Activated CD4-positive, alpha-beta T cell treated with anti-CD3 and anti-CD28 coated beads for 36 hours (primary cell): ENCODE measurements at regions of chr1 and their contacts with region 1.

Region 1: GRCh38 chr1:22052115-22053016 is at the start of gene CDC42:
- DNase-seq: peak; percentile 98
- ATAC-seq: peak; percentile 86
- H3K4me3 Mint-ChIP-seq: peak within 1 kb of the TSS; percentile 96
- H3K27ac Mint-ChIP-seq: peak within 1 kb of the TSS; percentile 98
- H3K4me1 Mint-ChIP-seq: peaks cover 56% of the 10 kb centered on the region
- H3K27me3 Mint-ChIP-seq: no peaks in the 10 kb centered on the region
- total RNA-seq, gene CDC42: 298 to 339 TPM

Region 2: DNA sequence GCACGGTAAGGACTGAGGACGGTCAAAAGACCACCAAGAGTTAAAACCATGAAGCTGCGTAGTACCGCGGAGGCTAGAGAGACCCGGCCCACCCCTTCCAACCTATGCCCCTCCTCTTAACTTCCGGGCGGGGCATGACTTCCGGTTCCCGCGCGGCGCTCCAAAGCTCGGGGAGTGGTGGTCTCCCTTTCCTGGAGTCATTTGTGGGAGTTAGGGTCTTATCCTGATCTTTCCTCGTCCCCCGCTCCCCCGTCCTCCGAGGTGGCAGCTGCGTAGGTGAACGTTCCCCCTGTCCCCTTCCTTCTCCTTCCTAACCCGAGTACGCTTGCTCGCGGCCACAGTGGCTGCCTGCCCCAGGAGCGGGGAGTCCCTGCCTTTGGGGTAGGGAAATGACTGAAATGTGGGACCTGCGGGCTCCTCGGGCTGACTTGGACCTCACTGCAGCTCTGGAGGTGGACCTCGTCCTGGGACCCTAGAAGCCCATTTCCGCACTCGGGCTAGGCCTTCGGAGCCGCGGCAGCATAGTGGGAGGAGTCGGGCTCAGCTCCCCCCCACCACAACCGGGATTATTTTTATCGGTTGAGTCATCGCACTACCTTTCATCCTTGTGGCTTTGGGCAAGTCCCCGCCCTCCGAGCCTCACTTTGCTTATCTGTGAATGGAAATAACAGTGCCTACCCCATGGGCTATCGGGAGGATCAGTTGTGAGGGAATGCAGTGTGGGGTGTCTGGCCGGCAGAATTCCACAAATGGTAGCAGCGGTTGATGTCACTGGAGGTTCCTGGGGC is 26.8 kb before region 1 on chr1:
- CTCF ChIA-PET with region 1: interaction called, 35 read pairs
- POLR2A ChIA-PET with region 1: interaction called, 65 read pairs
- intact Hi-C with region 1: loop called (anchors 1 kb)
- DNase-seq: peak; percentile 94
- ATAC-seq: peak; percentile 74
- H3K4me3 Mint-ChIP-seq: peak overlapping the region; percentile 82
- H3K27ac Mint-ChIP-seq: peak overlapping the region; percentile 99
- H3K4me1 Mint-ChIP-seq: peaks cover 59% of the 10 kb centered on the region
- H3K27me3 Mint-ChIP-seq: no peaks in the 10 kb centered on the region

Region 3: GRCh38 chr1:22031214-22031962 is 21.0 kb before region 1 on chr1:
- CTCF ChIA-PET with region 1: interaction called, 4 read pairs
- POLR2A ChIA-PET with region 1: interaction called, 11 read pairs
- intact Hi-C with region 1: no loop called
- DNase-seq: peak; percentile 74
- ATAC-seq: peak; percentile 74
- H3K4me3 Mint-ChIP-seq: peak overlapping the region; percentile 56
- H3K27ac Mint-ChIP-seq: peak overlapping the region; percentile 85
- H3K4me1 Mint-ChIP-seq: peaks cover 61% of the 10 kb centered on the region
- H3K27me3 Mint-ChIP-seq: no peaks in the 10 kb centered on the region

Region 4: DNA sequence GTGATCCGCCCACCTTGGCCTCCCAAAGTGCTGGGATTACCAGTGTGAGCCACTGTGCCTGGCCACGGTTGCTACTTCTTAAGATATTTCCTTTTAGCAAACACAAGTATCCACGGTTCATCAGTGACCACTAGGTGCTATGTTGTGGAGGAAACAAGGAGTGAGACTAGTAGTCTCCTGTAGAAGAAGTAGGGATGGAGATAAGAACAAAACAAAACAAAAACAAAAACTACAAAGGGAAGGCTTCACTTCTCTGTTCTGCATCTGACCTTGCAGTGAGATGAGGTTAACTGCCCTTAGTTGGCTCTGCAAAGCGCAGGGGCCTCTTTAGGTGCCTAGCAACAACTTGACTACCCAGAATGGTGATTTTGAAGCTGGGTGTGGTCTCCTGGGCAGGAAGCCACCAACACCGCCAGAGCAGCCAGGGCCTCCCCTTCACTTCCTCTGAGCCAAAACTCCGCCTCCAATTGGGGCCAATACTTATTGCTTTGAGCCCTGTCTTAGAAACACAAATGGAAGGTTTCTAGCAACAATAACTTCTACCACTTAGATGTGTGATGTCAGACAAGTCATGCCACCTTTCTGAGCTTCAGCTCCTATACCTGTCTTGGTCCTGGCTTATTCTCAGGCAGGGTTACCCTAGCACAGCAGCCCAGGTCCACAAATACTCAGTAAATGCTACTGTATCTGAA is 12.6 kb before region 1 on chr1:
- CTCF ChIA-PET with region 1: interaction called, 9 read pairs
- POLR2A ChIA-PET with region 1: interaction called, 30 read pairs
- intact Hi-C with region 1: loop called (anchors 1 kb)
- DNase-seq: peak; percentile 94
- ATAC-seq: peak; percentile 98
- H3K4me3 Mint-ChIP-seq: peak overlapping the region; percentile 64
- H3K27ac Mint-ChIP-seq: peak overlapping the region; percentile 97
- H3K4me1 Mint-ChIP-seq: peaks cover 62% of the 10 kb centered on the region
- H3K27me3 Mint-ChIP-seq: no peaks in the 10 kb centered on the region

Region 5: GRCh38 chr1:22064751-22065402 is 12.5 kb after region 1 on chr1:
- CTCF ChIA-PET with region 1: interaction called, 3 read pairs
- POLR2A ChIA-PET with region 1: interaction called, 7 read pairs
- intact Hi-C with region 1: loop called in 1 of 2 experiments (anchors 1 kb)
- DNase-seq: no peak
- ATAC-seq: no peak
- H3K4me3 Mint-ChIP-seq: no peak overlapping the region
- H3K27ac Mint-ChIP-seq: peak overlapping the region; percentile 81
- H3K4me1 Mint-ChIP-seq: peaks cover 87% of the 10 kb centered on the region
- H3K27me3 Mint-ChIP-seq: no peaks in the 10 kb centered on the region

Region 6: DNA sequence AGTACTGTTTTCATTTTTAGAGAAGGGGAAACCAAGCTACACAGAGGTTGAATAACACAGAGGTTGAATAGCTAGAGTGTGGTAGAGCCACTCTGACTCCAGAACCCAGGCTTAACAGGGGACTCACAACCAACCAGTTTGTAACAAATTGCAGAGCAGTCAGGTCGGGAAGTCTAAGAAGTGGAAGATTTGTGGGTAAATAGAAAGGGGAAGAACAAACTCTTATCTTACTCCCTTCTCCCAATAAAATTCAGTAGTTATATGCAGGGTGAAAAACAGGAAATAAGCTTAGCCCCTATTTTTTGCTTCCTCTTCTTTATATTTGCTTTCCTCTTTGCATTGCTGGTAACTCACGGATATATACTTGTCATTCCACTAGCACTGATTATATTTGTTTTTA is 23.4 kb after region 1 on chr1:
- CTCF ChIA-PET with region 1: no interaction called
- POLR2A ChIA-PET with region 1: no interaction called
- intact Hi-C with region 1: no loop called
- DNase-seq: no peak
- ATAC-seq: peak; percentile 32
- H3K4me3 Mint-ChIP-seq: no peak overlapping the region
- H3K27ac Mint-ChIP-seq: peak overlapping the region; percentile 77
- H3K4me1 Mint-ChIP-seq: peaks cover 85% of the 10 kb centered on the region
- H3K27me3 Mint-ChIP-seq: no peaks in the 10 kb centered on the region

Region 7: GRCh38 chr1:22089787-22090186 is 37.4 kb after region 1 on chr1:
- CTCF ChIA-PET with region 1: interaction called, 3 read pairs
- POLR2A ChIA-PET with region 1: interaction called, 5 read pairs
- intact Hi-C with region 1: loop called (anchors 1 to 2 kb)
- DNase-seq: no peak
- ATAC-seq: no peak
- H3K4me3 Mint-ChIP-seq: peak overlapping the region; percentile 33
- H3K27ac Mint-ChIP-seq: peak overlapping the region; percentile 82
- H3K4me1 Mint-ChIP-seq: peaks cover 91% of the 10 kb centered on the region
- H3K27me3 Mint-ChIP-seq: no peaks in the 10 kb centered on the region

Region 8: GRCh38 chr1:22451702-22452474 is 399.5 kb after region 1 on chr1 and contains the start of gene ZBTB40:
- CTCF ChIA-PET with region 1: no interaction called
- POLR2A ChIA-PET with region 1: no interaction called
- intact Hi-C with region 1: loop called in 1 of 2 experiments (anchors 2 kb)
- DNase-seq: peak; percentile 98
- ATAC-seq: peak; percentile 97
- H3K4me3 Mint-ChIP-seq: peak within 1 kb of the TSS; percentile 94
- H3K27ac Mint-ChIP-seq: peak within 1 kb of the TSS; percentile 90
- H3K4me1 Mint-ChIP-seq: peaks cover 41% of the 10 kb centered on the region
- H3K27me3 Mint-ChIP-seq: no peaks in the 10 kb centered on the region
- total RNA-seq, gene ZBTB40: 12.7 to 13.5 TPM

Region 9: DNA sequence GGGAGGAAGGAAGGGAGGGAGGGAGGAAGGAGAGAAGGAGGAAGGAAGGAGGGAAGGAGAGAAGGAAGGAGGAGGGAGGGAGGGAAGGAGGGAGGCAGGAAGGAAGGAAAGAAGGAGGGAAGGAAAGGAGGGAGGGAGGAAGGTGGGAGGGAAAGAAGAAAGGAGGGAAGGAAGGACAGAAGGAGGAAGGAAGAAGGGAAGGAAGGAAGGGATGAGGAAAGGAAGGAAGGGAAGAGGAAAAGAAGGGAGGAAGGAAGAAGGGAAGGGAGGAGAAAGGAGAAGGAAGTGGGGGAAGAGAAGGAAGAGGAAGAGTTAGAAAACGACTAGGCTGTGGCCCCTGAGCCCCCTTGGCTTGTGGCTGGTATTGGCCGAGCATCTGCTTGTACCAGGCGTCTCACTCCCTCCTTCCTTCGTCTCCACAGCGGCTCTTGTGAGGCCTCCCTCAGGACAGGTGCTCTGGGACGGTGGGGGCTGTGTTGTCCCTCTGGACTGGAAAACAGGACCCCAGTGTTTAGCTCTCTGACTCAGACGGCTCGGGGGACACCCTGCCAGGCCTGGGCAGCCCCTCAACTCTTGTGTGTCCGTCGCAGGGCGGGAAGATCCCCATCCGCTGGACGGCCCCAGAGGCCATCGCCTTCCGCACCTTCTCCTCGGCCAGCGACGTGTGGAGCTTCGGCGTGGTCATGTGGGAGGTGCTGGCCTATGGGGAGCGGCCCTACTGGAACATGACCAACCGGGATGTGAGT is 547.9 kb after region 1 on chr1:
- CTCF ChIA-PET with region 1: no interaction called
- POLR2A ChIA-PET with region 1: no interaction called
- intact Hi-C with region 1: no loop called
- DNase-seq: no peak
- ATAC-seq: no peak
- H3K4me3 Mint-ChIP-seq: no peak overlapping the region
- H3K27ac Mint-ChIP-seq: no peak overlapping the region
- H3K4me1 Mint-ChIP-seq: no peaks in the 10 kb centered on the region
- H3K27me3 Mint-ChIP-seq: peaks cover 7% of the 10 kb centered on the region